ENCODE measurements at regions of chr16 and their contacts with region 1.

Region 1: GRCh38 chr16:75519881-75520280 is 16.0 kb downstream of the CHST5 start:
- DNase-seq: no peak
- ATAC-seq: no peak
- H3K4me3 Mint-ChIP-seq: no peak overlapping the region
- H3K27ac Mint-ChIP-seq: no peak overlapping the region
- H3K4me1 Mint-ChIP-seq: peaks cover 14% of the 10 kb centered on the region
- H3K27me3 Mint-ChIP-seq: no peaks in the 10 kb centered on the region
- CTCF ChIP-seq: no peak

Region 2: GRCh38 chr16:75385507-75386152 is 134.3 kb before region 1 on chr16:
- CTCF ChIA-PET with region 1: interaction called, 10 read pairs
- POLR2A ChIA-PET with region 1: no interaction called
- DNase-seq: no peak
- ATAC-seq: peak; percentile 28; the same call in 1 of the 2 replicates
- H3K4me3 Mint-ChIP-seq: no peak overlapping the region
- H3K27ac Mint-ChIP-seq: peak overlapping the region; percentile 5; the same call in 1 of the 2 replicates
- H3K4me1 Mint-ChIP-seq: no peaks in the 10 kb centered on the region
- H3K27me3 Mint-ChIP-seq: no peaks in the 10 kb centered on the region
- CTCF ChIP-seq: peak; percentile 52

Region 3: GRCh38 chr16:75464130-75464918 is 55.6 kb before region 1 on chr16 and contains the start of gene TMEM170A:
- CTCF ChIA-PET with region 1: interaction called, 55 read pairs
- POLR2A ChIA-PET with region 1: interaction called, 10 read pairs
- DNase-seq: peak; percentile 100
- ATAC-seq: peak; percentile 97
- H3K4me3 Mint-ChIP-seq: peak within 1 kb of the TSS; percentile 89
- H3K27ac Mint-ChIP-seq: peak within 1 kb of the TSS; percentile 84
- H3K4me1 Mint-ChIP-seq: peaks cover 34% of the 10 kb centered on the region
- H3K27me3 Mint-ChIP-seq: no peaks in the 10 kb centered on the region
- CTCF ChIP-seq: peak; percentile 100
- total RNA-seq, gene TMEM170A: 45.6 to 53.4 TPM (median 52.0 TPM) in 3 replicates

Region 4: DNA sequence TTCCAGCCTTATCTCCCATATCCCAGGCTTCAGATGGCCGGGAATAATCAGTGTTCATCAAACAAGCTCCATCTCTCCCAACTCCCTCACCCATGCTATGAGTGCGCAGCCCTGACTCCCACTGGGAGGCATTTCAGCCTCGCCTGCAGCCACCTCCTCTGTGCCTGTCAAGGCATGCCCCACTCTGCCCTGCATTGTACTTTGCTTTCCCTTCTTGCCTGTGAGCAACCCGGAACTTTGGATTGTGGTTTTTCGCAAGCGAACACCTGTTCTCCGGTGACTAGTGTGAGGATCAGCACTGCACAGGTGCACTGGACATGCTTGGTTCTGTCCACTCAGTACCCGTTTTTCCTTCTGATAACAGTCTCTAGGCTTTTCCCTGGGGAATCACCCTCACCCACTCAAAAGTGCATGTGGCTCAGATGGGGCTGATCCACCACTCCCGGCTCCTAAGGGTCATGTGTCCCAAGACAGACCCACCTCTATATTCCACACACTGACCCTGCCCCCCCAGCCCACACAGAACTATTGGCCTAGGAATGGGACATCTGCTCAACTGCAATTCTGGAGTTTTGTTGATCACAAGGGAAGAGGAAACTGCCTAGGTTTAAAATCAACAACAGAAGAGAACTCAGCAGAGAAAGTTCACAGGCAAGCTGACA is 33.7 kb before region 1 on chr16:
- CTCF ChIA-PET with region 1: interaction called, 12 read pairs
- POLR2A ChIA-PET with region 1: no interaction called
- DNase-seq: no peak
- ATAC-seq: no peak
- H3K4me3 Mint-ChIP-seq: no peak overlapping the region
- H3K27ac Mint-ChIP-seq: peak overlapping the region; percentile 57; the same call in 1 of the 2 replicates
- H3K4me1 Mint-ChIP-seq: peaks cover 9% of the 10 kb centered on the region
- H3K27me3 Mint-ChIP-seq: no peaks in the 10 kb centered on the region
- CTCF ChIP-seq: no peak

Region 5: GRCh38 chr16:75506567-75506966 is 13.3 kb before region 1 on chr16:
- CTCF ChIA-PET with region 1: interaction called, 19 read pairs
- POLR2A ChIA-PET with region 1: interaction called, 6 read pairs
- DNase-seq: no peak
- ATAC-seq: no peak
- H3K4me3 Mint-ChIP-seq: no peak overlapping the region
- H3K27ac Mint-ChIP-seq: no peak overlapping the region
- H3K4me1 Mint-ChIP-seq: no peaks in the 10 kb centered on the region
- H3K27me3 Mint-ChIP-seq: no peaks in the 10 kb centered on the region; the same call in 1 of the 2 replicates
- CTCF ChIP-seq: no peak

Region 6: GRCh38 chr16:75555707-75556430 is 36.0 kb after region 1 on chr16 and contains the start of gene TMEM231:
- CTCF ChIA-PET with region 1: interaction called, 57 read pairs
- POLR2A ChIA-PET with region 1: interaction called, 6 read pairs
- DNase-seq: peak; percentile 98
- ATAC-seq: peak; percentile 86
- H3K4me3 Mint-ChIP-seq: peak within 1 kb of the TSS; percentile 100
- H3K27ac Mint-ChIP-seq: peak within 1 kb of the TSS; percentile 99
- H3K4me1 Mint-ChIP-seq: peaks cover 35% of the 10 kb centered on the region
- H3K27me3 Mint-ChIP-seq: peaks cover 3% of the 10 kb centered on the region; the same call in 1 of the 2 replicates
- CTCF ChIP-seq: no peak
- total RNA-seq, gene TMEM231: 9.2 to 12.0 TPM (median 10.7 TPM) in 3 replicates

Region 7: GRCh38 chr16:75622761-75623605 is 103.1 kb after region 1 on chr16 and contains the start of gene ADAT1:
- CTCF ChIA-PET with region 1: interaction called, 23 read pairs
- POLR2A ChIA-PET with region 1: interaction called, 11 read pairs
- DNase-seq: peak; percentile 98
- ATAC-seq: peak; percentile 96
- H3K4me3 Mint-ChIP-seq: peak within 1 kb of the TSS; percentile 94
- H3K27ac Mint-ChIP-seq: peak within 1 kb of the TSS; percentile 96
- H3K4me1 Mint-ChIP-seq: peaks cover 15% of the 10 kb centered on the region
- H3K27me3 Mint-ChIP-seq: no peaks in the 10 kb centered on the region
- CTCF ChIP-seq: no peak
- total RNA-seq, gene ADAT1: 45.3 to 48.1 TPM (median 46.0 TPM) in 3 replicates

Measured in WTC11 (cell line).